Endothelial cell of umbilical vein (primary cell): ENCODE measurements at regions of chr10 and their contacts with region 1.

Region 1: DNA sequence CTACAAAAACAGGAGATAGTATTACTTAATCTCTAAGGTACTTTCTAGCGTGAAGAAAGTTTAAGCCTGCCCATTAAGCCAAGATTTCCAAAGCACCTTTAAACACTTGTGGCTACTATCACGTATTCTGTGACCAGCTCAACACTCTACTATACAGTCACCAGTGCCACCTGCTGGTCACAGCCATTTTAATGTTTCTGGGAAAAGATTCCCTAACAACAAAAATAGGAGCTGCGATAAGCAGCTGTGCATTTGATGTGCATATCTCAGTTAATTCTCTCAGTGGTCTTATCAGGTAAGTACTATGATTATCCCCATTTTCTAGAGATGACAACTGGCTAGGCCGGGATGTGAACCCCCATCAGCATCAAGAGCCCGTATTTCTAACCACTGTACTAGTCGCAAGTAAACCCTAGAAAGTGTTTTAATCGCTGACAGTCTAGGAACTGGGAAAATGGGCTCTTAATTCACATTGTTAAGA is 860 bp downstream of the SEC31B start:
- DNase-seq: peak; percentile 82
- H3K4me3 ChIP-seq: no peak overlapping the region
- H3K27ac ChIP-seq: no peak overlapping the region
- H3K4me1 ChIP-seq: peaks cover 31% of the 10 kb centered on the region
- H3K27me3 ChIP-seq: no peaks in the 10 kb centered on the region
- CTCF ChIP-seq: peak; percentile 58 to 66
- POLR2A ChIP-seq: no peak

Region 2: GRCh38 chr10:99754670-99755069 is 764.1 kb before region 1 on chr10:
- CTCF ChIA-PET with region 1: no interaction called
- POLR2A ChIA-PET with region 1: no interaction called
- dilution Hi-C with region 1: no loop called
- intact Hi-C with region 1: no loop called
- DNase-seq: peak; percentile 14
- H3K4me3 ChIP-seq: no peak overlapping the region
- H3K27ac ChIP-seq: no peak overlapping the region
- H3K4me1 ChIP-seq: no peaks in the 10 kb centered on the region
- H3K27me3 ChIP-seq: no peaks in the 10 kb centered on the region
- CTCF ChIP-seq: no peak
- POLR2A ChIP-seq: no peak

Region 3: GRCh38 chr10:99766302-99766681 is 752.5 kb before region 1 on chr10:
- CTCF ChIA-PET with region 1: no interaction called
- POLR2A ChIA-PET with region 1: no interaction called
- dilution Hi-C with region 1: no loop called
- intact Hi-C with region 1: no loop called
- DNase-seq: no peak
- H3K4me3 ChIP-seq: no peak overlapping the region
- H3K27ac ChIP-seq: no peak overlapping the region
- H3K4me1 ChIP-seq: no peaks in the 10 kb centered on the region
- H3K27me3 ChIP-seq: no peaks in the 10 kb centered on the region
- CTCF ChIP-seq: no peak
- POLR2A ChIP-seq: no peak

Region 4: GRCh38 chr10:100346765-100347567 is 171.8 kb before region 1 on chr10 and contains the start of gene SCD:
- CTCF ChIA-PET with region 1: interaction called, 49 read pairs
- POLR2A ChIA-PET with region 1: no interaction called
- dilution Hi-C with region 1: no loop called
- intact Hi-C with region 1: no loop called
- DNase-seq: peak; percentile 92
- H3K4me3 ChIP-seq: peak within 1 kb of the TSS; percentile 85 to 87 (median 85)
- H3K27ac ChIP-seq: peak within 1 kb of the TSS; percentile 48
- H3K4me1 ChIP-seq: peaks cover 42% of the 10 kb centered on the region
- H3K27me3 ChIP-seq: no peaks in the 10 kb centered on the region
- CTCF ChIP-seq: no peak
- POLR2A ChIP-seq: peak; percentile 83
- total RNA-seq, gene SCD: 396 and 426 TPM in 2 replicates

Region 5: DNA sequence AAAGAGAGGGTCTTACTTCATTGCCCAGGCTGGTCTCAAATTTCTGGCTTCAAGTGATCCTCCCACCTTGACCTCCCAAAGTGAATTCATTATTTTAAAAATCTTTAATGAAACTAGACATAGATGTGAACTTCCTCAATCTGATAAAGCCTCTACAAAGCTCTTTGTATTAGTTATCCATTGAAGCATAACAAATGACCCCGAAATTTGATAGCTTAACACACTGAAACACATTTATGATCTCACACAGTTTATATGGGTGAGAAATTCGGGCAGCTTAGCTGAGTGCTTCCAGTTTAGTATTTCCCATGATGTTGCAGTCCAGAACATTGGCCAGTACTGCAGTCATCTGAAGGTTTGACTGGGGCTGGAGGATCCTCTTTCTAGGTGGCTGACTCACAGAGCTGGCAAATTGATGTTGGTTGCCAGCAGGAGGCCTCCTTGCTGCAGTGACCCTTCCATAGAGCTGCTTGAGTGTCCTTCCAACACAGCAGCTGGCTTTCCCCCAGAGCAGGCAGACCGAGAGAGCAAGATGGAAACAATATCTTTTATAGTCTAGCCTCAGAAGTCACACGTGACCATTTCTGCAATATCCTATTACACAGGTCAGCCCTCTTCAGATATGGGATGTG is 72.6 kb before region 1 on chr10:
- CTCF ChIA-PET with region 1: interaction called, 13 read pairs
- POLR2A ChIA-PET with region 1: no interaction called
- dilution Hi-C with region 1: no loop called
- intact Hi-C with region 1: no loop called
- DNase-seq: no peak
- H3K4me3 ChIP-seq: no peak overlapping the region
- H3K27ac ChIP-seq: no peak overlapping the region
- H3K4me1 ChIP-seq: no peaks in the 10 kb centered on the region
- H3K27me3 ChIP-seq: peaks cover 3 to 9% of the 10 kb centered on the region in 2 experiments
- CTCF ChIP-seq: peak in 1 of 2 donors; percentile 1
- POLR2A ChIP-seq: no peak

Region 6: GRCh38 chr10:100508691-100509150 is 10.1 kb before region 1 on chr10:
- CTCF ChIA-PET with region 1: interaction called, 53 read pairs
- POLR2A ChIA-PET with region 1: no interaction called
- dilution Hi-C with region 1: no loop called
- intact Hi-C with region 1: no loop called
- DNase-seq: peak; percentile 73
- H3K4me3 ChIP-seq: no peak overlapping the region
- H3K27ac ChIP-seq: no peak overlapping the region
- H3K4me1 ChIP-seq: no peaks in the 10 kb centered on the region
- H3K27me3 ChIP-seq: no peaks in the 10 kb centered on the region
- CTCF ChIP-seq: peak; percentile 51 to 54
- POLR2A ChIP-seq: no peak

Region 7: DNA sequence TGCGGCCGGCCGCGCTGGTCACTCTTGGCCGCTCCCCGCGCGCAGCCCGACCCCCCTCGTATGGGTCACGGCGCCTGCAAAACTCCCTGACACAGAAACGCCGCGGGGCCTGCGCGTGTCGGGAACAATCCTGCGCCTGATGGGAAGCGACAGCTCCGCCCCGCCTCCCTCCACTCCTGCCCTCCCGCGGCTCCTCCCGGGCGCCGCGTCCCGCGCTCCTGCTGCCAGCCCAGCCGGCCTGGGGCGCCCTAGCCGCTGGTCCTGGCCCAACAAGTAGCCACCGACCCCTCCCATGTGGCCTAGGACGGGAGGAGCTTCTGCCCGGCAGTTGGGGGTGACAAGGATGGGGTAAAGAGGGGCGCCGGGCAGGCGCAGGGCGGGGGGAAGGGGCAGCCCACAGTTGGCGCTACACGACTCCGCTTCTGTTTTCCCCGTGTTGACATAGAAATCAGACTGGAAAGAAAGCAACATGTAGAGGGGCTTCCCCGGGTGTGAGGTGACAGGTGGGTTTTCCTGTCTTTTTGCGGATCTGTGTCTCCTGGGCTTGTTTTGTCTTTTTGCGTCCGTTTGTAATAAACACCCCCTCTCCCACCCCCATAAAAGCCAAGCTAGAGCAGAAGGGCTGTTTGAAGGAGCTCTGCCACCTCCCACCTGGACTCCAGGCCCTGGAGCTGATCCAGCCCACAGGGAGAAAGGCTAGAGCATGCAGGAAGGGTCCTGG is 191.5 kb after region 1 on chr10:
- CTCF ChIA-PET with region 1: no interaction called
- POLR2A ChIA-PET with region 1: no interaction called
- dilution Hi-C with region 1: no loop called
- intact Hi-C with region 1: no loop called
- DNase-seq: no peak
- H3K4me3 ChIP-seq: no peak overlapping the region
- H3K27ac ChIP-seq: no peak overlapping the region
- H3K4me1 ChIP-seq: no peaks in the 10 kb centered on the region
- H3K27me3 ChIP-seq: peaks cover 61% of the 10 kb centered on the region in 2 experiments
- CTCF ChIP-seq: no peak
- POLR2A ChIP-seq: no peak

Region 8: DNA sequence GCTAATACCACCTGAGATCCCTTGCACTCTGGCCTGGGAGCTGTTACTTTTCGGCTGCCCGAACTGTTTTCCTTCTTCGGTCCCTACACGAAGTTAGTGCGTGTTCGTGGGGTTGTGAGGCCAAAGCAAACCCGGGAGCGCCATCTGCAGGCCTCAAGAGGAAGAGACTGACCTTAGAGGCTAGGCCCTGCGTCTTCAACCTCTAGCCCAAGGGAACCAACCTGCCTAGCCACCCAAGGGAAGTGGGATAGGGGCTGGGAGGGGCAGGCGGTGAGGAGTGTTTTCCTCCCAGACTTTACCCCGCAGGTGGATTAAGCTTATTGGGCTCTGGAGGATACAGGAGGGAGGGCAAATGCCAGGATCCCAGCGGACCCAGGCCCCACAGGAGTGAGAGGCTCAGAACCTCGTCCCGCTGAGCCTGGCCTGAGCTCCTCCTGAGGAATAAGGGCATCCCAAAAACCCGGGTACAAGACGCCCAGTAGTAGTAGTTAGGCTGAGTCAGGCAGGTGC is 224.9 kb after region 1 on chr10:
- CTCF ChIA-PET with region 1: interaction called, 14 read pairs
- POLR2A ChIA-PET with region 1: no interaction called
- dilution Hi-C with region 1: no loop called
- intact Hi-C with region 1: no loop called
- DNase-seq: peak; percentile 44
- H3K4me3 ChIP-seq: no peak overlapping the region
- H3K27ac ChIP-seq: no peak overlapping the region
- H3K4me1 ChIP-seq: no peaks in the 10 kb centered on the region
- H3K27me3 ChIP-seq: peaks cover 87 to 96% of the 10 kb centered on the region in 2 experiments
- CTCF ChIP-seq: peak; percentile 66 to 82
- POLR2A ChIP-seq: no peak